ENCODE measurements at regions of chr2 and their contacts with region 1.

Region 1: DNA sequence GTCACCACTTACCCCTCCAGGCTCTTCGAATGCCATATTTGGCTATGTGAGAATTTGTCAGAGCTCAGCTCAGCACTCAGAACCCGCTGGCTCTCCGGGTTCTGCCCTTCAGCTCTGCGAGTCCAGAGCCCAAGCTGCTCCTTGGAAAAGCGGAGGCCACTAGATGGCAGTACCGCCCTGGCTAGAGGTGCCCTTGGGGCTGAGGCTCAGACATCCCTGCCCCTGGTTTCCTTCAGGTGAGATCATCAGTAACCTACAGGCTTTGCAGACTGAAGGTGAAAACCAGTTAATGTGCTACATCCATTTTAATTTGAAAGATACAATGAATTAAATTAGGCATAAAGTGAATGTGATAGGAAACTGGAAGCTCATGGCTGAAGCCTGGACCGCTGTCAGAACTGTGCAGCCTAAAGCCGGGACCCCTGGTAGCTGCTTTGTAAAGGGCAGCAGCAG is 285.6 kb downstream of the AGAP1 start:
- DNase-seq: peak; percentile 44 to 96 (median 80)

Region 2: DNA sequence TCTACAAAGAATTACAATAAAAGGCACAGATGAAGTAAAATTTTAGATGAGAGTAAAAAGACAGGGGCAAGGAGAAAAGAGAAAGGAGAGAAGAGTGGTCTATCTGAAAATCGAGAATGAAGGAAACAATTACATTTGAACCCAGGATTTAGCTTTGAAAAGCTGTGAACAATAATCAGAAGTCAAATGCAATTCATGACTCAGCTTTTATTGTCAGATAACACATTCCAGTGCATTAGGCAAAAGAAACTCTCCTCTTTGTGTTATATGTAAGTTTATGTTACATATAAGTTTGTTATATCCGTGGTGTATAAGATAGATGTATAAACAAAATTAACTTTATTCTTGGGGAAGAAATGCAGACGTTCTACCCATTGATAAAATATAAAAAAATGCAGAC is 104.2 kb after region 1 on chr2:
- intact Hi-C with region 1: no loop called
- DNase-seq: no peak

Region 3: DNA sequence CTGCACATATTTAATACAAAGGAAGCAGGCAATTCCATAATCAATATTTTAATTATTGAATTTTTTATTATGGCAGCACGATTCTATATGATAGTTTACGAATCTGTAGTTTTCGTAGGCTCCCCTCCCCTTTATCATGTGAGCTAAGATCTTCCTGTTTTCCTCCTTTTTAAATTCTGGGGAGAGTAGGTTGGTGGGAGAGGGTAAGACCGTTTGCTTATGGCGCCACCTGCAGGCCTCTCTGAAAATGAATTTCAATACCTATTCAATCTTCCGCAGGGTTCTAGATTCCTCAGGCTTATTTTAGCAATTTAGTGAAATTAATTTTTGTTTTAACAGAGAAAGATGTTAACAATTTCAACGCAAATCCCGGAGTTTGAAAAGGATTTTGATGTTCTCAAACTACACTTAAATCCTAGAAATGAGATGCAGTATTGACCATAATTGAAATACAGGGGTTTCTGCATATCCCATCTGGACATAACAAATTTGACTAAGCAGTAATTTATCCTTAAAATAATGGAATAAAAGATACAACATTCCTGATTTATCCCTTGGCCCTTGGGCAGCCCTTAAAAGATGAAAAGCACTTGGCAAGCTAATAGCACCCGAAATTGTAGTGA is 401.5 kb after region 1 on chr2:
- intact Hi-C with region 1: loop called (anchors 5 kb)
- DNase-seq: peak in 3 of 10 donors; percentile 55 to 62 (median 61)

Region 4: GRCh38 chr2:237072067-237072931 is 1292.8 kb after region 1 on chr2:
- intact Hi-C with region 1: loop called (anchors 5 kb)
- DNase-seq: peak; percentile 50 to 95 (median 82)

Measured in posterior cingulate gyrus (tissue), 11 donors.